Activated CD4-positive, alpha-beta T cell treated with anti-CD3 and anti-CD28 coated beads, Interleukin-2, amount 10 ng/mL, durations not matched to agents 24 days and 14 days (primary cell): ENCODE measurements at regions of chr19 and their contacts with region 1.

Region 1: DNA sequence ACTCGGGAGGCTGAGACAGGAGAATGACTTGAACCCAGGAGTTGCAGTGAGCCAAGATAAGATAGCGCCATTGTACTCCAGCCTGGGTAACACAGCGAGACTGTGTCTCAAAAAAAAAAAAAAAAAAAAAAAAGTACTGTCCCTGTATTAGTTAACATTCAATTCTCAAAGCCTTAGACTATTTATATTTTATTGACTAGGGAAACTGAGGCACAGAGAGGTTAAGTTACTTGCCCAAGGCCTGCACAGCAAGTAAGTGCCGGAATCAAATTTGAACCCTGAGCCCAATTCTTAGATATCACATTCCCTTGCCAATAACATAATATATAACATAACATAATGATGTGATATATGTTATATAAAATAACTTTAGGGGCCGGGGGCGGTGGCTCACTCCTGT is 921 bp upstream of the KLC3 start:
- DNase-seq: no peak
- H3K4me3 Mint-ChIP-seq: no peak overlapping the region
- H3K27ac Mint-ChIP-seq: no peak overlapping the region
- H3K4me1 Mint-ChIP-seq: peaks cover 6% of the 10 kb centered on the region
- H3K27me3 Mint-ChIP-seq: peaks cover 9% of the 10 kb centered on the region

Region 2: DNA sequence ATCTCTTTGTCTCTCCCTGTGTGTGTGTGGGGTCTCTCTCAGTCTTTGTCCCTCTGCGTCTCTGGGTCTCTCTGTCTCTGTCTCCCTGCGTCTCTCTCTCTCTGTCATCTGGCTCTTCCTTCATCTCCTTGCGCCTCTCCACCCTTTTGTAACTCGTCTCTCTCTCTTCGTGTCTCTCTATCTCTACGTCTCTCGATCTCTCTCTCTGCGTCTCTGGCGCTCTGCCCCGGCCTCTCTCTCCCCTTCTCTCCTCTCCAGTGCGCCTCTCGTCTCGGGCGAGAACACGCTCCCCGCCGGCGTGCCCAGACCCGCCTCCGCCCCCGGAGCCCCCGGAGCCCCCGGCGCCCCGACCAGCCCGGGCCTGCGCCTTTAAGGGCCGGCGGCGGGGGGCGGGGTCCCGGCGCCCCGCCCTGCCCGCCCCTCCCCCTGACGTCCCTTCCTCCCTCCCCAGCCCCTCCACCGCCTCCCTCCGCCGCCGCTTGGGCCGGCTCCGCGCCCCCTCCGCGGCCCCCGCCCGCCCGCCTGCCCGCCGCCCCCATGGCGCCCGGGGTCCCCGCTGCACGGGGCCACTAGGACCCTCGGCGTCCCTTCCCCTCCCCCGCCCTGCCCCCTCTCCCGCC is 88.7 kb before region 1 on chr19 and contains the start of gene MARK4:
- intact Hi-C with region 1: loop called (anchors 2 kb)
- DNase-seq: peak; percentile 86
- H3K4me3 Mint-ChIP-seq: peak within 1 kb of the TSS; percentile 87
- H3K27ac Mint-ChIP-seq: peak within 1 kb of the TSS; percentile 80
- H3K4me1 Mint-ChIP-seq: peaks cover 22% of the 10 kb centered on the region
- H3K27me3 Mint-ChIP-seq: peaks cover 2% of the 10 kb centered on the region
- total RNA-seq, gene MARK4: 26.1 and 29.0 TPM in 2 replicates